Sciatic nerve (tissue), 2 donors: ENCODE measurements at regions of chr7 and their contacts with region 1.

Region 1: DNA sequence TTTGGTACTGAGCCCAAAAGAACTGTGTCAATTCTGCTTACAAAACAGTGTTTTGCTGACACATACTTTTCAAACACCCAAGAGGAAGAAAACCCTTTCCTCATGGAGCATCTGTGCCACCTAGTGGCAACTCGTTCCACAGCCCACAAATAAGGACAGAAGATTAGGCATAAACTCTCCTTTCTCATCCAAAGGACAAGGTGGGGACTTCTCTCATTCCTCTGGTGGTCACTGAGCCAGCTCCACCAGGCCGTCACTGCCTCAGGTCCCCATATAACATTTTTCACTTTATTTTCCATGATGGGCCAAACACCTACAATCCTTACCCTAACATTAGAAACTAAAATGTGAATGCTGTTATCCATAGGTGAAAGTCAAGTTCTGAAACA is 76.9 kb downstream of the RNF216 start:
- DNase-seq: peak; percentile 90
- ATAC-seq: peak; percentile 91

Region 2: DNA sequence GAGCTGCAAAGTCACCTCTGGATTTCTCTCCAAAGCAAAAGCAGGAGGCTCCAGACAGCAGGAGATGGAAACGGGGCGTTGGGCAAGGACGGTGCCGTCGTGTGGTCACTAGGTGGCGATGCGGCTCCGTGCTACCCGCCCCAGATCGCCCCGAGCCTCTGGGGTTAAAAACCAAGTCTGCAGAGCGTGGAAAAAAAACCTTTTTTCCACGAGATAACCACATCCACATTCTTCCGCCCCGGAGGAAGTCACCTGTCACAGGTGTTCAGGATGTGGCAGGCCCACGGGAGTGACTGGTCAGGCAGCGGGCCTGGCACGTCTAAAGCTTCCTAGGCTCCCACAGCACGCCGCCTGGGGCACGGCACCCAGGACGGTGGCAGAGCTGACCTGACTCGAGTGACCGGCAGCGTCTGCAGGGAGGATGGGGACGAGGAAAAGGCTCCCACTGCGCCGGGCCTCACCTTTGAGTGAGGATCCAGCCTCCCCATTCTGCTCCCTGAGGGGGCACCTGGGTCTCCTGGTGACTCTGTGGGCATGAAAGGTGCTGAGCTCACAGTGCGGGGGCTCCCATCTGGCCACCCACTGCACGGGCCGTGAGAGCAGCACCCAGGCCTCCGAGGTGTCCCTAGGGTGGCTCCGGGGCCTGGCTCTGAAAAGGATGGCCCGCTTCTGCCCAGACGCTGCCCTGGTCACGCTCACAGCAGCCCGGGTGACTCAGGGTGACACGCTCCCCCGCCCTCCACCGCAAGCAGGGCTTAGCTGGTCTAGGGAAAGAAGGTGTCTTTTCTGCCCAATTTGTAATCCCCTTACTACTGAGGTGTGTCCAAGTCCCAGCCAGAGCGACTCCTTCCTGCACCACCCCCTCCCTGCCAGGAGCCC is 209.6 kb before region 1 on chr7:
- intact Hi-C with region 1: loop called (anchors 10 kb)
- DNase-seq: peak; percentile 87
- ATAC-seq: peak; percentile 88

Region 3: DNA sequence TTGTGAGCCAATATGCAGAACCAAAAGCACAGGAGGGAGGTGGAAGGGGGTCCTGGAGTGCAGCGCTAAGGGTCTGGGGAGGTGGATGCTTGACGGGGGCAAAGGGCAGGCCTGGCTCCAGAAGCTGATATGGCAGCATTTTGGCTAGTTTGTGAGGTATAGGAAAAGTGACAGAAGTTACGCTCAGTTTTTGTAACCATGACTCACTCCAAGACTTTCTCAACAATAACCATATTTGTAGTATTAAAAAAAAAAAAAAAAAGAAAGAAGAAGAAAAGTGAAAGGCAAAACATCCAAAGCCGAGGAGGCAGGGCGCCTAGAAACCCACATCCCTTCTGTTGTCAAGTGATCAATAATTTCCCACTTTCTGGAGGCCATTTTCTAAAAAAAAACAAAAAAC is 15.4 kb before region 1 on chr7:
- intact Hi-C with region 1: loop called (anchors 1 kb)
- DNase-seq: no peak
- ATAC-seq: no peak